ENCODE measurements at regions of chr4 and their contacts with region 1.

Region 1: GRCh38 chr4:98828801-98829200 is 100.1 kb downstream of the EIF4E start:
- DNase-seq: peak in 5 of 9 donors; percentile 16 to 40 (median 20)
- ATAC-seq: no peak
- H3K4me3 ChIP-seq: no peak overlapping the region
- H3K4me3 Mint-ChIP-seq: no peak overlapping the region
- H3K27ac ChIP-seq: no peak overlapping the region
- H3K27ac Mint-ChIP-seq: no peak overlapping the region
- H3K4me1 ChIP-seq: no peaks in the 10 kb centered on the region
- H3K4me1 Mint-ChIP-seq: peaks cover 0 to 16% (median 0%) of the 10 kb centered on the region in 7 donors
- H3K27me3 ChIP-seq: no peaks in the 10 kb centered on the region
- H3K27me3 Mint-ChIP-seq: peaks cover 0 to 14% (median 0%) of the 10 kb centered on the region in 5 donors

Region 2: GRCh38 chr4:98150092-98150761 is 678.6 kb before region 1 on chr4:
- CTCF ChIA-PET with region 1: no interaction called
- POLR2A ChIA-PET with region 1: no interaction called
- intact Hi-C with region 1: loop called in 1 of 2 experiments (anchors 1 kb)
- DNase-seq: peak in 1 of 9 donors; percentile 11
- ATAC-seq: no peak
- H3K4me3 ChIP-seq: no peak overlapping the region
- H3K4me3 Mint-ChIP-seq: no peak overlapping the region
- H3K27ac ChIP-seq: no peak overlapping the region
- H3K27ac Mint-ChIP-seq: peak overlapping the region in 2 of 9 donors; percentile 5 to 68
- H3K4me1 ChIP-seq: no peaks in the 10 kb centered on the region
- H3K4me1 Mint-ChIP-seq: peaks cover 0 to 14% (median 5%) of the 10 kb centered on the region in 7 donors
- H3K27me3 ChIP-seq: no peaks in the 10 kb centered on the region
- H3K27me3 Mint-ChIP-seq: peaks cover 0 to 11% (median 0%) of the 10 kb centered on the region in 5 donors

Region 3: DNA sequence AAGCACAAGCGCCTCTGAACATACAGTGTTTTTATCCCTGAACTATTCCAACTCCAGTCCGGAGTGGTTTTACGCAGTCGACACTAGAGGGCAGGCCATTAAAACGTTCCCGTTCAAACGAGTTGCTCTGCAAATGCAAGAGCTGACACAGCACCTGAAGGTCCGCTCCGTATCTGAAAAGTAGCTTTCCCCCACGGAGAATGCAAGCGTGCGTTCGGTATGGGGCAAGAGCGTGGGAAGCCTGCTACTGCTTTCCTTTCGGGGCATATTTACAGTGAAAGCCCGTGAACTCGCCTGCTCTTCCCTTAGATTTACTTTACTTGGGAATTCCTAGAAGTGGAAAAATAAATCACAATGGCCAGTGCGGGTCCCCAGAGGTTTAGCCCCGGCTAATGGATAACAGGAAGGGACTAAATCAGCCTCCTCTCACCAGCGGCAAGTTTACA is 361.2 kb before region 1 on chr4:
- CTCF ChIA-PET with region 1: interaction called, 7 read pairs
- POLR2A ChIA-PET with region 1: no interaction called
- intact Hi-C with region 1: loop called (anchors 1 kb)
- DNase-seq: peak; percentile 14 to 76 (median 65)
- ATAC-seq: peak; percentile 93
- H3K4me3 ChIP-seq: peak overlapping the region; percentile 11
- H3K4me3 Mint-ChIP-seq: peak overlapping the region; percentile 66 to 87 (median 74)
- H3K27ac ChIP-seq: no peak overlapping the region
- H3K27ac Mint-ChIP-seq: peak overlapping the region in 3 of 9 donors; percentile 24 to 34 (median 32)
- H3K4me1 ChIP-seq: no peaks in the 10 kb centered on the region
- H3K4me1 Mint-ChIP-seq: peaks cover 7 to 40% (median 24%) of the 10 kb centered on the region in 7 donors
- H3K27me3 ChIP-seq: no peaks in the 10 kb centered on the region
- H3K27me3 Mint-ChIP-seq: no peaks in the 10 kb centered on the region

Region 4: GRCh38 chr4:98560321-98560720 is 268.5 kb before region 1 on chr4:
- CTCF ChIA-PET with region 1: no interaction called
- POLR2A ChIA-PET with region 1: no interaction called
- intact Hi-C with region 1: loop called in 1 of 2 experiments (anchors 1 kb)
- DNase-seq: no peak
- ATAC-seq: no peak
- H3K4me3 ChIP-seq: no peak overlapping the region
- H3K4me3 Mint-ChIP-seq: no peak overlapping the region
- H3K27ac ChIP-seq: no peak overlapping the region
- H3K27ac Mint-ChIP-seq: peak overlapping the region in 1 of 9 donors; percentile 32
- H3K4me1 ChIP-seq: no peaks in the 10 kb centered on the region
- H3K4me1 Mint-ChIP-seq: peaks cover 0 to 12% (median 5%) of the 10 kb centered on the region in 7 donors
- H3K27me3 ChIP-seq: no peaks in the 10 kb centered on the region
- H3K27me3 Mint-ChIP-seq: no peaks in the 10 kb centered on the region

Region 5: GRCh38 chr4:99414389-99414788 is 585.6 kb after region 1 on chr4:
- CTCF ChIA-PET with region 1: no interaction called
- POLR2A ChIA-PET with region 1: no interaction called
- intact Hi-C with region 1: no loop called
- DNase-seq: no peak
- ATAC-seq: no peak
- H3K4me3 ChIP-seq: no peak overlapping the region
- H3K4me3 Mint-ChIP-seq: no peak overlapping the region
- H3K27ac ChIP-seq: no peak overlapping the region
- H3K27ac Mint-ChIP-seq: no peak overlapping the region
- H3K4me1 ChIP-seq: no peaks in the 10 kb centered on the region
- H3K4me1 Mint-ChIP-seq: no peaks in the 10 kb centered on the region
- H3K27me3 ChIP-seq: no peaks in the 10 kb centered on the region
- H3K27me3 Mint-ChIP-seq: peaks cover 0 to 11% (median 0%) of the 10 kb centered on the region in 5 donors